Activated CD4-positive, alpha-beta T cell treated with anti-CD3 and anti-CD28 coated beads for 36 hours (primary cell): ENCODE measurements at regions of chr9 and their contacts with region 1.

Region 1: GRCh38 chr9:137070201-137070905 is at the start of gene SAPCD2:
- DNase-seq: peak; percentile 92
- ATAC-seq: peak; percentile 91
- H3K4me3 Mint-ChIP-seq: peak within 1 kb of the TSS; percentile 71
- H3K27ac Mint-ChIP-seq: peak within 1 kb of the TSS; percentile 71
- H3K4me1 Mint-ChIP-seq: peaks cover 9% of the 10 kb centered on the region
- H3K27me3 Mint-ChIP-seq: no peaks in the 10 kb centered on the region
- total RNA-seq, gene SAPCD2: 6.4 to 8.8 TPM

Region 2: GRCh38 chr9:137029058-137029936 is 41.1 kb before region 1 on chr9:
- CTCF ChIA-PET with region 1: interaction called, 32 read pairs
- POLR2A ChIA-PET with region 1: no interaction called
- intact Hi-C with region 1: loop called (anchors 1 to 5 kb)
- DNase-seq: peak; percentile 88
- ATAC-seq: peak; percentile 52
- H3K4me3 Mint-ChIP-seq: peak overlapping the region; percentile 60
- H3K27ac Mint-ChIP-seq: peak overlapping the region; percentile 42
- H3K4me1 Mint-ChIP-seq: peaks cover 46% of the 10 kb centered on the region
- H3K27me3 Mint-ChIP-seq: no peaks in the 10 kb centered on the region

Region 3: GRCh38 chr9:137055385-137056364 is 14.7 kb before region 1 on chr9:
- CTCF ChIA-PET with region 1: interaction called, 20 read pairs
- POLR2A ChIA-PET with region 1: no interaction called
- intact Hi-C with region 1: no loop called
- DNase-seq: no peak
- ATAC-seq: no peak
- H3K4me3 Mint-ChIP-seq: no peak overlapping the region
- H3K27ac Mint-ChIP-seq: no peak overlapping the region
- H3K4me1 Mint-ChIP-seq: no peaks in the 10 kb centered on the region
- H3K27me3 Mint-ChIP-seq: peaks cover 7% of the 10 kb centered on the region

Region 4: DNA sequence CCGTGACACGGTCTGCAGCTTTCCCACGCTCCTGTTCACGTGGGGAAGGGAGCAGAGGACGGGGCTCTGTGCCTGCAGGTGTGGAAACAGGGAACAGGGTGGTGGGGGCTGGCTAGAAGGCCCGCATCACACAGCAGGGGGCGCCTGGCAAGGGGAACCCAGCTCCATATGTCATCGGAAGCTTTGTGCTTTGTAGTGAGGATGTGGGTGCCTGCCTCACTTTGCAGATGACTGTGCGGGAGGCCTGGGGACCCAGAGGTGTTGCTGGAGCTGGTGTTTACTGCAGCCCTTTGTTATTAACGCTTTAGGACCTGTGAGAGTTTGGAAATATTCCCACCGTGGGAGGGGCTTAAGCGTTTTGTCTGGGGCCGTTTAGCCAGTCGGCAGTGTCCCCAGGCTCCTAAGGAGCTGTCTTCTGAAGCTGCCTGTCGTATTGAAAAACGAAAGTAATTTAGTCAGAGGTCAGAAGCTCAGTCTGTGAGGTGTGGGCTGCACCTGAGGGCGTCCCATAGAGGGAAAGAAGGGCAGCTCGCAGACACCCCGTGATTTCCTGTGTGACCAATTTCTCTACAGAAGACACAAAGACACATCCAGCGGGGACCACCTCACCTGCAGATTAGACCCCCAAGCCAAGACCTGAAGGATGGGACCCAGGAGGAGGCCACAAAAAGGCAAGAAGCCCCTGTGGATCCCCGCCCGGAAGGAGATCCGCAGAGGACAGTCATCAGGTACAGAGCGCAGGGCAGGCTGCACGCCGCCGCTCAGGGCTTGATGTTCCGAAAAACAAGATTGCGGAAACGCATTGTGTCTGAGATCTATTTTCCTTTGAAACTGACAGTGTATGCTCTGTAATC is 25.5 kb after region 1 on chr9:
- CTCF ChIA-PET with region 1: interaction called, 16 read pairs
- POLR2A ChIA-PET with region 1: interaction called, 5 read pairs
- intact Hi-C with region 1: no loop called
- DNase-seq: peak; percentile 94
- ATAC-seq: peak; percentile 98
- H3K4me3 Mint-ChIP-seq: peak overlapping the region; percentile 70
- H3K27ac Mint-ChIP-seq: peak overlapping the region; percentile 91
- H3K4me1 Mint-ChIP-seq: peaks cover 17% of the 10 kb centered on the region
- H3K27me3 Mint-ChIP-seq: no peaks in the 10 kb centered on the region